MCF 10A (cell line): ENCODE measurements at regions of chr2 and their contacts with region 1.

Region 1: DNA sequence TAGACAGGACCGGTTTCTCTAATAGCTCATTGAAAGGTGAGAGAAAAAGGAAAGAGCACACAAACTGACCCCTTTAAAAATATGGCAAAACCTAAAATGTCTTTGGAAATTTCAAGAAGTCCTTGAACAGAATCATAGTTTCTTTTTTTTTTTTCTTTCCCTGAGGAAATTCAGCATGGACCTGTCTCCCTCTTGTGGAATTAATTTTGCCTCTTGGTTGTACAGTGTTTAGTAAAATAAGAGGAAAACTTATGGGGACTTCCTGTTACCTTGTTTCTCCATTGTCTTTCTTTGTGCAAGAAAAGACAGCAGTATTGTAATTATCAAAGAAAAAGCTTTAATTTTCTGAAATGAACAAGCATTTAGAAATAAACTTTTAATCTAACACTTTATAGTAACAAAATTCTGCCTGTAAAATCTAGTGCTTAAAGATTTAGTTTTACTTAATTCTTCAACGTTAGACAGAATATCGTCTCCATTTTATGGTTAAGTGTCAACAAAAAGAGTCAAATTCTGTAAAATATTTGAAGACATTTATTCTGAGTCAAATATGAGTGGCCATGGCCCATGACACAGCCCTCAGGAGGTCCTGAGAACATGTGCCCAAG is 176.3 kb upstream of the NABP1 start:
- DNase-seq: peak; percentile 51
- H3K4me3 Mint-ChIP-seq: no peak overlapping the region
- H3K27ac Mint-ChIP-seq: no peak overlapping the region
- H3K4me1 Mint-ChIP-seq: no peaks in the 10 kb centered on the region
- H3K27me3 Mint-ChIP-seq: no peaks in the 10 kb centered on the region
- CTCF ChIP-seq: peak; percentile 58

Region 2: DNA sequence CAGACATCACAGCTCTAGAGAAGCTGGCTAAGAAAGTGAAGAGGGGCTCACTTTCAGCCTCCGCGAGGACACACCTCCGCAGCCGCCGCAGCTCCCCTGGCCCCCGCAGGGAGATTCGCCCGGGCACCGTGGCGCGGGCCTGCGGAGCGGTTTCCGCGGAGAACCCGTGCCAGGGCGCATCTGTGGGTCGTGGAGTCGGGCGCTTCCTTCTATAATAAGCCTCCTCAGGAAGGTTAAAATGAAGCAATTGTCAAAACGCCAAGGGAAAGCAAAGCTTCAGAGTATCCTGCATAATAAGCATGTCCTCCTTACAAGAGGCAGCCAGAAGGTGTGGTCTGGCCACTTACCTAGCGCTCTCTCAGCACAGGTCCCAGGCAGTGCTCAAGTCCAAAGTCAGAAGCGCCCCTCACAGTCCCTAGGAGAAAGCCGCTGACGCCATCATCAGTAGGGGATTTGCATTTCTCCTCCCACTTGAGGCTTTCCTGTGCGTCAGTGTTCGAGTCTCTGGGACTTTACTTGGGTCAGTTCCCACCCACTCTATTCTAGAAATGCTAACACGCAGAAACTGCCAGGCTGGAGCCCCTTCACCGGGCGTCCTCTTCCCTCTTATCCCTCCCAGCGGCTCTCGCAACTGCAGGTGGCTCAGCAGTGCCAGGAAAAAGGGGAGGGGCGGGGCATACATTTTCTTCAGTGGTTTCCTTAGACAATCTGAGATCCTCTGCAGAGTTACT is 350.9 kb before region 1 on chr2 and contains the start of gene STAT4:
- CTCF ChIA-PET with region 1: interaction called, 49 read pairs
- POLR2A ChIA-PET with region 1: interaction called, 3 read pairs
- intact Hi-C with region 1: no loop called
- DNase-seq: peak; percentile 57
- H3K4me3 Mint-ChIP-seq: peak within 1 kb of the TSS; percentile 69
- H3K27ac Mint-ChIP-seq: no peak within 1 kb of the TSS
- H3K4me1 Mint-ChIP-seq: no peaks in the 10 kb centered on the region
- H3K27me3 Mint-ChIP-seq: peaks cover 10% of the 10 kb centered on the region
- CTCF ChIP-seq: no peak
- total RNA-seq, gene STAT4: 0.83 and 1.4 TPM in 2 replicates

Region 3: GRCh38 chr2:191202881-191203397 is 298.7 kb before region 1 on chr2:
- CTCF ChIA-PET with region 1: interaction called, 10 read pairs
- POLR2A ChIA-PET with region 1: no interaction called
- intact Hi-C with region 1: no loop called
- DNase-seq: peak; percentile 69
- H3K4me3 Mint-ChIP-seq: peak overlapping the region; percentile 49
- H3K27ac Mint-ChIP-seq: peak overlapping the region; percentile 98
- H3K4me1 Mint-ChIP-seq: peaks cover 23% of the 10 kb centered on the region
- H3K27me3 Mint-ChIP-seq: no peaks in the 10 kb centered on the region
- CTCF ChIP-seq: no peak

Region 4: GRCh38 chr2:191302459-191303139 is 199.1 kb before region 1 on chr2:
- CTCF ChIA-PET with region 1: interaction called, 14 read pairs
- POLR2A ChIA-PET with region 1: no interaction called
- intact Hi-C with region 1: no loop called
- DNase-seq: peak; percentile 37
- H3K4me3 Mint-ChIP-seq: no peak overlapping the region
- H3K27ac Mint-ChIP-seq: no peak overlapping the region
- H3K4me1 Mint-ChIP-seq: peaks cover 31% of the 10 kb centered on the region
- H3K27me3 Mint-ChIP-seq: no peaks in the 10 kb centered on the region
- CTCF ChIP-seq: no peak

Region 5: DNA sequence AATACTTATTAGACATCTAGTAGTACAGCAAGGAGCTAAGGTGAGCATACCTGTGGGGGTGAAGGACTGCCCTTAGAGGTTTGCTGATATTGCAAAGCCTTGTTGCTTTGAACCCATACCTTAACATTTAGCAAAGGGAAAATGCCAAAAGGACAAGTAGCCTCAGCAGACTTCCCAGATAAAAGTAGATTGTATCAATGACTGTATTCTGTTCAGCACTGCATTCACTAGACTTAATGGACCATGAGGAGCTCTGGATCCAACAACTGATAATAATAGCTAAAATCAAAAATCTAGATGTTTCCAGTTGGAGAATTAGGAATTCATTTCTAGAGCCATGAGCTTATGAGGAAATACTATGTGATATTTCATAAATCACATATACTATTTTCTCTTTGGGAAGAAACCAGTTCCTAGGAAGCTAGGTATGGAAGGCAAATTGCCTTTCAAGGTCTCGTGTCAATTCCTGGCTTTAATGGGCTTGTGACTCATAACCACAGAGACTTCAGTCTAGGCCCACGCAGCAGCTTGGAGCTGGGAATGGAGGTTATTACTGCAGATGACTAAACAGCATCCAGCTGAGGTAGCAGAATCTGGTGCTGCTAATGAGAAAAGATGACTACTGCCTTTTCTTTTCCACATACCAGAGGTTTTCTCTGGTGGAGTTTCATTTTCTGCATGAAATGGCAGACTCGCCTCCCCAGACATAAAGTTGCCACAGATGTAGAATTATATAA is 14.9 kb before region 1 on chr2:
- CTCF ChIA-PET with region 1: interaction called, 50 read pairs
- POLR2A ChIA-PET with region 1: interaction called, 5 read pairs
- intact Hi-C with region 1: no loop called
- DNase-seq: peak; percentile 95
- H3K4me3 Mint-ChIP-seq: no peak overlapping the region
- H3K27ac Mint-ChIP-seq: peak overlapping the region; percentile 3
- H3K4me1 Mint-ChIP-seq: peaks cover 11% of the 10 kb centered on the region
- H3K27me3 Mint-ChIP-seq: no peaks in the 10 kb centered on the region
- CTCF ChIP-seq: no peak